AG04449 (cell line): ENCODE measurements at regions of chr1 and their contacts with region 1.

Region 1: DNA sequence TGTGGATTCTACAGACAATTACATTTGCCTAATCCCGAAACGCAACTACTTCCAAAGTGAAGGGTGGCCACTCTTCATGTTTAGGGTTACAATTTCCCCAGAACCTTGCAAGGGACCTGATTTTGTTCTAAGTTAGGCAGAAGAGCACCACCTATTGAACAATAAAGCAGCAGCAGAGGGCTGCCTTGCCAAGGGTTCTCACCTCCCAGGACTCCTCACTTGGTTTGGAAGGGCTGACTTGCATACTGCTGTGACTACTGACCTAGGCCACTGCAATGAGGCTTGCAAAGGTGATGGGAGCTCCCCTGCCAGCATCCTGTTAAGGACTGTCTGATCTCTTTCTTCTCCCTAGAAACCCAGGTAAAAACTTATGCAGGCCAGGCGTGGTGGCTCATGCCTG is 14.2 kb downstream of the MTOR start:
- DNase-seq: no peak
- H3K4me3 ChIP-seq: no peak overlapping the region
- CTCF ChIP-seq: no peak

Region 2: GRCh38 chr1:10873189-10873588 is 375.0 kb before region 1 on chr1:
- CTCF ChIA-PET with region 1: no interaction called
- POLR2A ChIA-PET with region 1: no interaction called
- DNase-seq: no peak
- H3K4me3 ChIP-seq: no peak overlapping the region
- CTCF ChIP-seq: no peak

Region 3: GRCh38 chr1:11227106-11228077 is 20.8 kb before region 1 on chr1:
- CTCF ChIA-PET with region 1: interaction called, 70 read pairs
- POLR2A ChIA-PET with region 1: no interaction called
- DNase-seq: no peak
- H3K4me3 ChIP-seq: no peak overlapping the region
- CTCF ChIP-seq: no peak

Region 4: GRCh38 chr1:11262171-11263049 is 14.3 kb after region 1 on chr1 and contains the start of gene MTOR:
- CTCF ChIA-PET with region 1: interaction called, 27 read pairs
- POLR2A ChIA-PET with region 1: interaction called, 3 read pairs
- DNase-seq: peak; percentile 98
- H3K4me3 ChIP-seq: peak within 1 kb of the TSS; percentile 89
- CTCF ChIP-seq: peak; percentile 29